HEK293 (cell line): ENCODE measurements at regions of chr6 and their contacts with region 1.

Region 1: DNA sequence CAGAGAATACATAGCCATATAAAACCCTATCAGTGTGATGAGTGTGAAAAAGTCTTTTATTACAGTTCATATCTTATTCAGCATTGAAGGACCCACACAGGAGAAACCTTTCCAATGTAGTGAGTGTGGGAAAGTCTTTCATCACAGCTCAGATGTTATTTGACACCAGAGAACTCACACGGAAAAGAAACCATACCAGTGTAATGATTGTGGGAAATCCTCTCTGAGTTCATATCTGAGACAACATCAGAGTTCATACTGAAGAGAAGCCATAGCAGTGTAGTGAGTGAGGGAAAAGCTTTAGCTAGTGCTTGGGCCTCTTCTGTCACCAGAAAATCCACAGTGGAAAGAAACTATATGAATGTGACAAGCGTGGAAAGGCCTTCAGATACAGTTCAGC is 8.6 kb upstream of the ZSCAN16 start:
- H3K4me3 ChIP-seq: no peak overlapping the region
- H3K27ac ChIP-seq: no peak overlapping the region
- H3K4me1 ChIP-seq: no peaks in the 10 kb centered on the region
- CTCF ChIP-seq: no peak

Region 2: GRCh38 chr6:28104392-28105244 is 11.2 kb before region 1 on chr6:
- CTCF ChIA-PET with region 1: interaction called, 6 read pairs
- POLR2A ChIA-PET with region 1: interaction called, 10 read pairs
- H3K4me3 ChIP-seq: peak overlapping the region; percentile 62
- H3K27ac ChIP-seq: peak overlapping the region; percentile 78
- H3K4me1 ChIP-seq: no peaks in the 10 kb centered on the region
- CTCF ChIP-seq: peak; percentile 95